Mammary epithelial cell (primary cell): ENCODE measurements at regions of chr7 and their contacts with region 1.

Region 1: GRCh38 chr7:3174515-3175284 is 126.4 kb upstream of the SDK1 start:
- DNase-seq: no peak
- H3K4me3 ChIP-seq: no peak overlapping the region
- H3K27ac ChIP-seq: no peak overlapping the region
- H3K4me1 ChIP-seq: no peaks in the 10 kb centered on the region
- H3K27me3 ChIP-seq: no peaks in the 10 kb centered on the region
- CTCF ChIP-seq: no peak

Region 2: DNA sequence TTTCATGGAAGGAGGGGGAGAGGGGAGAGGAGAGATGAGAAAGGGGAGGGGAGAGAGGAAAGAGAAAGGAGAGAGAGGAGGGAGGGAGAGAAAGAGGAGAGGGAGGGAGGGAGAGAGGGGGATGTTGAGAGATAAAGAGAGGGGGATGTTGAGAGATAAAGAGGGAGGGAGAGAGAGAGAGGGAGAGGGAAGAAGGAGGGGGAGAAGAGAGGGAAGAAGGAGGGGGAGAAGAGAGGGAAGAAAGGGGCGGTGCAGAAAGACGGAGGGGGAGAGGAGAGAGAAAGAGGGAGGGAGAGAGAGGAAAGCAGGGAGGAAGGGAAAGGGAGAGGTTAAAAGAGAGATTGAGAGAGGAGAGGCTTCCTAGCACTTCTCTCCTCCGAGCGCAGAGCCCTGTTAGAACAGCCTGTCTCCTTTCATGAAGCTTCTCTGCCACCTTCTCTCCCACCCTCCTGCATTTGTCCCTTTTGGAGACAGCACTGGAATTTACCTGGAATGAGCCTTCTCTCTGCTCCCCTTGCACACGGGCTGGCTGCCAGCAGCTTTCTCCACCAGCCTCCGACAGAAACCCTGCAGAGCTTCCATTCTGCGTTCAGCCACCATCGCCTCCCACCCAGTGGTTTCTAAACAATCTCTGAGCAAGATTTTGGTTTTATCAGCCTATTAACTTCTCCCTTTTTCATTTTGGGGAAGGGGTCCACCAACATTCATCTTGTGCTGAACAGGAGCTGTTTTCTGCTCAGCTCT is 57.0 kb before region 1 on chr7:
- CTCF ChIA-PET with region 1: no interaction called
- dilution Hi-C with region 1: loop called (anchors 5 kb)
- in situ Hi-C with region 1: no loop called
- intact Hi-C with region 1: no loop called
- DNase-seq: no peak
- H3K4me3 ChIP-seq: no peak overlapping the region
- H3K27ac ChIP-seq: no peak overlapping the region
- H3K4me1 ChIP-seq: no peaks in the 10 kb centered on the region
- H3K27me3 ChIP-seq: no peaks in the 10 kb centered on the region
- CTCF ChIP-seq: no peak